ENCODE measurements at regions of chr13 and their contacts with region 1.

Region 1: GRCh38 chr13:19782049-19782726 is 557 bp downstream of the PSPC1 start:
- DNase-seq: peak; percentile 41 to 83 (median 59)
- ATAC-seq: peak; percentile 44 to 73 (median 71)
- H3K4me3 ChIP-seq: peak overlapping the region; percentile 62 to 99 (median 86)
- H3K27ac ChIP-seq: peak overlapping the region; percentile 87 to 99 (median 92)
- H3K4me1 ChIP-seq: peaks cover 0 to 16% (median 8%) of the 10 kb centered on the region in 12 donors
- H3K27me3 ChIP-seq: no peaks in the 10 kb centered on the region
- CTCF ChIP-seq: peak in 1 of 12 donors; percentile 8
- POLR2A ChIP-seq: no peak

Region 2: GRCh38 chr13:19633479-19634255 is 148.5 kb before region 1 on chr13 and contains the start of gene MPHOSPH8:
- intact Hi-C with region 1: loop called in 3 of 10 experiments (anchors 5 to 10 kb)
- DNase-seq: peak; percentile 95 to 97 (median 96)
- ATAC-seq: peak; percentile 99
- H3K4me3 ChIP-seq: peak within 1 kb of the TSS; percentile 58 to 96 (median 82)
- H3K27ac ChIP-seq: peak within 1 kb of the TSS; percentile 79 to 98 (median 94)
- H3K4me1 ChIP-seq: peaks cover 7 to 40% (median 30%) of the 10 kb centered on the region in 12 donors
- H3K27me3 ChIP-seq: no peaks in the 10 kb centered on the region
- CTCF ChIP-seq: no peak
- POLR2A ChIP-seq: peak; percentile 78
- total RNA-seq, gene MPHOSPH8: 15.2 to 39.3 (median 26.1) TPM

Region 3: DNA sequence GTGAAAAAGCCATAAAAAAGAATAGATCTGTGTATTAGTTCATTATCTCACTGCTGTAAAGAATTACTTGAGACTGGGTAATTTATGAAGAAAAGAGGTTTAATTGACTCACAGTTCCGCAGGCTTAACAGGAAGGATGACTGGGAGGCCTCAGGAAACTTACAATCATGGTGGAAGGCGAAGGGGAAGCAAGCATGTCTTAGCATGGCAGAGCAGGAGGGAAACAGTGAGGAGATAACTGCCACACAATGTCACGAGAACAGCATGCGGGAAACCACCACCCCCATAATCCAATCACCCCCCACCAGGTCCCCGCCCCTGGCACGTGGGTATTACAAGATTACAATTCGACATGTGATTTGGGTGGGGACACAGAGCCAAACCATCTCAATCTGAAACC is 1030.7 kb after region 1 on chr13:
- intact Hi-C with region 1: no loop called
- DNase-seq: no peak
- ATAC-seq: no peak
- H3K4me3 ChIP-seq: no peak overlapping the region
- H3K27ac ChIP-seq: peak overlapping the region in 7 of 12 donors; percentile 7 to 85 (median 74)
- H3K4me1 ChIP-seq: peaks cover 0 to 40% (median 29%) of the 10 kb centered on the region in 12 donors
- H3K27me3 ChIP-seq: no peaks in the 10 kb centered on the region
- CTCF ChIP-seq: no peak
- POLR2A ChIP-seq: no peak

Measured in heart left ventricle (tissue), 16 donors.